Tibial artery (tissue), 4 donors: ENCODE measurements at regions of chrX and their contacts with region 1.

Region 1: GRCh38 chrX:130975947-130976346 is 72.9 kb upstream of the ENOX2 start:
- DNase-seq: no peak
- H3K4me3 ChIP-seq: no peak overlapping the region
- H3K27ac ChIP-seq: no peak overlapping the region
- H3K4me1 ChIP-seq: no peaks in the 10 kb centered on the region
- H3K27me3 ChIP-seq: no peaks in the 10 kb centered on the region
- CTCF ChIP-seq: peak; percentile 14 to 19

Region 2: DNA sequence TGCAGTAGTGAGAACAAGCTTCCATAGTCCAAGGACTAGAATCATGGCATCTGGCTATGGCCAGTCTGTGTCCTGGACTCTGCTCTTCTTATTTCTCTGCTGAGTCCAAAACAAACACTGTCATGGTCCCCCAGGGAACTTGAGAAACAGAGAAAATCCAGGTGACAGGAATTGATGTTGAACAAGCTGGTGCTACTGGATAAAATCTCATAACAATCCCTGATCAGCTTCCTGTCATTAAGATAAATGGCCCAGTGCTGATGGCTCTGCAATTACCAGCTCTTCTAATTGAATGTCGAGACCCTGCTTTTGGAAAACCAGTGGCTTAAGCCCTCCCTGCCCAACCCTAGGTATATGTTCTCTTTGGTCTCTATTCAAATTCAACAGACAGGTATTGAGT is 23.4 kb after region 1 on chrX:
- intact Hi-C with region 1: no loop called
- DNase-seq: no peak
- H3K4me3 ChIP-seq: no peak overlapping the region
- H3K27ac ChIP-seq: no peak overlapping the region
- H3K4me1 ChIP-seq: no peaks in the 10 kb centered on the region
- H3K27me3 ChIP-seq: no peaks in the 10 kb centered on the region
- CTCF ChIP-seq: no peak

Region 3: DNA sequence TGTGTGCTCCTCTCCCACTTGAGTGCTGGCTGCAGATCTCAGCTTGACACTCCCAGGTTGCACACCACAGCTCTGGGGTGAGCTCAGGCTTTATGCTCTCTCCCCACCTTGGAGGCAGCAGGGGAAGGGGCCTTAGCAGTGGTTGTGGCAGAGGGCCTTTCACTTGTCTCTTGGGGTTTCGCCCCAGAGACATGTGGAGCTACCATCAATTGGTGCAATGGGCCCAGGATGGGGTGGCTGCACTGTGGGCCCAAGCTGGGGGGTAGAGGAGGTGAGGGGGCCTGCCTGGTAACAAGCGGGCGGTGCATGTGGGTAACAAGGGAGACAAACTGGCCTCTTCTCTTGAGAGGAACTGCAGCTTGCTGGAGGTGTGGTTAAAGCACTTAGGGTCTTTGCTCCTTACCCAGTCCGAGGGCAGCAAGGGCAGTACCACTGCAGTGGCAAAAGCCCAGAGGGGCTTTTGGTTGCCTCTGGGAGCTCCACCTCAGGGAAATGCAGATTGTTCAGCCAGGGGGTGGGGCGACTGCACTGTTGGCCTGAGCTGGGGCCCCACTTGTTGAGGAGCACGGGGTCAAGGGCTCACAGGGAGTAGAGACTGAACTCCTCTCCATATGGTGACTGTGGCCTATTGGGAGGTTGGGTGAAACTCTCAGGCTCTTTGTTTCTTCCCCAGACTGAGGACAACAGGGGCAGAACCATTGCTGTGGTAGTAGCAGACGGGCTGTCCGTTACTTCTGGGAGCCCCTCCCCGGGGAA is 537.4 kb after region 1 on chrX:
- intact Hi-C with region 1: no loop called
- DNase-seq: no peak
- H3K4me3 ChIP-seq: no peak overlapping the region
- H3K27ac ChIP-seq: no peak overlapping the region
- H3K4me1 ChIP-seq: no peaks in the 10 kb centered on the region
- H3K27me3 ChIP-seq: no peaks in the 10 kb centered on the region
- CTCF ChIP-seq: no peak

Region 4: DNA sequence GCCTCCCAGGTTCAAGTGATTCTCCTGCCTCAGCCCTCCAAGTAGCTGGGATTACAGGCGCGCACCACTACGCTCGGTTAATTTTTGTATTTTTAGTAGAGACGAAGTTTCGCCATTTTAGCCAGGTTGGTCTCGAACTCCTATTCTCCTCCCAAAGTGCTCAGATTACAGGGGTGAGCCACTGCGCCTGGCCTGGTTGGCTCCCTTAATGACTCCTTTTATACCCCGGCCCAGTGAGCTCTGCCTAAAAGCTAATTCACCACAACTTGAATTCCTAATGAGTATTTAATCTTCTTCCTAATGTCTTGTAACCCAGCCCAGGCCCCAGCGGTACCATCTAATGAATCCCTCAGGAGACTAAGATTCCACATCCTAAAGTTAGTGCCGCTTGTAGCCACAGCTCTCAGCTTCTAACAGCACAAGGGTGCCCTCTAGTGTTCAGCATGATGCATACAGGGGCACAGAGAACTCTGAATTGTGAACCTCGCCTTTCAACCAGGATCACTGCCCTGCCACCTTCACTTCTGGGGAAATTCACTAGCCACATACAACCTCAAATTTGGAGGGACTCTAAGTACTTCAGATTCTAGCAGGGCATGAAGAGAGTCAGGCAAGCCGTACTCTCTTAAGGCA is 657.5 kb after region 1 on chrX:
- intact Hi-C with region 1: loop called (anchors 10 kb)
- DNase-seq: peak in 1 of 2 donors; percentile 23
- H3K4me3 ChIP-seq: no peak overlapping the region
- H3K27ac ChIP-seq: no peak overlapping the region
- H3K4me1 ChIP-seq: no peaks in the 10 kb centered on the region
- H3K27me3 ChIP-seq: no peaks in the 10 kb centered on the region
- CTCF ChIP-seq: peak; percentile 46 to 56